ENCODE measurements at regions of chr10 and their contacts with region 1.

Region 1: GRCh38 chr10:13074561-13075451 is 25.2 kb upstream of the OPTN start:
- DNase-seq: peak in 4 of 5 donors; percentile 22 to 34 (median 28)
- H3K4me3 ChIP-seq: no peak overlapping the region
- H3K4me3 Mint-ChIP-seq: no peak overlapping the region
- H3K27ac ChIP-seq: no peak overlapping the region
- H3K27ac Mint-ChIP-seq: no peak overlapping the region
- H3K4me1 ChIP-seq: no peaks in the 10 kb centered on the region
- H3K4me1 Mint-ChIP-seq: peaks cover 0 to 4% (median 0%) of the 10 kb centered on the region in 4 donors
- H3K27me3 ChIP-seq: no peaks in the 10 kb centered on the region
- H3K27me3 Mint-ChIP-seq: peaks cover 4 to 15% of the 10 kb centered on the region in 2 donors

Region 2: DNA sequence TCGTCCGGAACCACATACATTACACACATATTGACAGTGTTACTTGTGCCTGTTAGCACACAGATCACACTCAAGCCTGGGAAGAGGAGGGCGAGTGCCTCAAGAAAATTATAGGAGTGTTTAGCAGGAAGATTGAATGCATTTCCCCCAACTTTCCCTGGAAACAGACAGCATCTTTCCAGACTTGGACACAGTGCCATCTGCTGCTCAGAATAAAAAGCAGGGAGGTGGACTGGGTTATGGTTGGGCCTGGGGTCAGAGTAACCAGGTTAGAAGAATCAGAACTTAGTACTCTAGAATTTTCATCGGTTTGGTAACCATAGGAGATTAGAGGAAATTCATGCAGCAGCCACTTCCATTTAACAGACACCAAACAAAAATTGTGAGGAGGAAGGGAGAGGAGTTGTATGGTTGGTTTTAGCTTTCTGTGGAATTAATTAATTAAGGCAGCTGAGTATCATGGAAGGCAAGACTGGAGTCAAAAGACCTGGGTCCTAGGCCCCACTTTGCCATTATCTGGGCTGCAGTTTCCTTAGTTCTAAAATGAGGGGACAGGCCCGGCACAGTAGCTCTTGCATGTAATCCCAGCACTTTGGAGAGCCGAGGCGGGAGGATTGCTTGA is 18.2 kb before region 1 on chr10:
- CTCF ChIA-PET with region 1: interaction called, 12 read pairs
- POLR2A ChIA-PET with region 1: no interaction called
- intact Hi-C with region 1: no loop called
- DNase-seq: no peak
- H3K4me3 ChIP-seq: no peak overlapping the region
- H3K4me3 Mint-ChIP-seq: no peak overlapping the region
- H3K27ac ChIP-seq: no peak overlapping the region
- H3K27ac Mint-ChIP-seq: no peak overlapping the region
- H3K4me1 ChIP-seq: no peaks in the 10 kb centered on the region
- H3K4me1 Mint-ChIP-seq: no peaks in the 10 kb centered on the region
- H3K27me3 ChIP-seq: no peaks in the 10 kb centered on the region
- H3K27me3 Mint-ChIP-seq: peaks cover 6 to 11% of the 10 kb centered on the region in 2 donors

Measured in CD4-positive, alpha-beta memory T cell (primary cell).